Calu3 (cell line): ENCODE measurements at regions of chr3 and their contacts with region 1.

Region 1: DNA sequence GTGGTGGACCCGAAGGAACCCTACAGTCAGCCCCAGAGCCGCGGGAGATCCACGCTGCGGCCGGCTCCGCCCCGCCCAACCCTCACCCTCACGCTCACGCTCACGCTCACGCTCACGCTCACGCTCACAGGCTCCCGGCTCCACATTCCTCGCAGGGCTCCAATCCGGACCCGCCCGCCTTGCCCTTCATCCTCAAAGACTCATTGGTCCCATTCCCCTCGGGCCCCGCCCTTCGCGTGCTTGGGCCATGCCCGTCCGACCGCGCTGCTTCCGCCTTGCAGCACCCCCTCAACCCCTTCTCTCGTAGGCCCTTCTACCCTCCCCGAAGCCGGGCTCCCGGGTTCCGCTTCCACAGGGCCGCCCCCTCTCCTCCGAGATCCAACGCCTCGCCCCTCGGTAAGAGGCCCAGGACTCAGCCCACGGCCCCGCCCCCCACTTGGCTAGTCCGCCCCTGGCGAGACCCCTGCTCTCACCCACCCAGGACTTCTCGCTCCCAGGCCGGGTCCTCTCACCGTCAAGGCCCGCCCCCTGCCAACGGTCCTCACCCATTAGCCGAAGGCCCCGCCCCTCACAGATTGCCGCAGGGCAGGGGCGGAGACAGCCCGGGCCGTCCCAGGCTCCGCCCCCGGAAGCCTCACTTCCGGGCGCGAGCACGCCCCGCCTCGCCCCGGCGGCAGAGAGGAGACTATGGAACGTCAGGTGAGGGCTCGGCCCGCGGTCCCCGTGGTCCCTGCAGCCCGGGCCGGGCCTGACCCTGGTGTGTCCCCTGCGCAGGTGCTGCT is at the start of gene APEH:
- DNase-seq: peak; percentile 99
- H3K4me3 Mint-ChIP-seq: peak within 1 kb of the TSS; percentile 97
- H3K27ac Mint-ChIP-seq: peak within 1 kb of the TSS; percentile 95
- H3K4me1 Mint-ChIP-seq: peaks cover 32% of the 10 kb centered on the region
- H3K27me3 Mint-ChIP-seq: no peaks in the 10 kb centered on the region
- CTCF ChIP-seq: no peak
- total RNA-seq, gene APEH: 187 and 207 TPM in 2 replicates

Region 2: DNA sequence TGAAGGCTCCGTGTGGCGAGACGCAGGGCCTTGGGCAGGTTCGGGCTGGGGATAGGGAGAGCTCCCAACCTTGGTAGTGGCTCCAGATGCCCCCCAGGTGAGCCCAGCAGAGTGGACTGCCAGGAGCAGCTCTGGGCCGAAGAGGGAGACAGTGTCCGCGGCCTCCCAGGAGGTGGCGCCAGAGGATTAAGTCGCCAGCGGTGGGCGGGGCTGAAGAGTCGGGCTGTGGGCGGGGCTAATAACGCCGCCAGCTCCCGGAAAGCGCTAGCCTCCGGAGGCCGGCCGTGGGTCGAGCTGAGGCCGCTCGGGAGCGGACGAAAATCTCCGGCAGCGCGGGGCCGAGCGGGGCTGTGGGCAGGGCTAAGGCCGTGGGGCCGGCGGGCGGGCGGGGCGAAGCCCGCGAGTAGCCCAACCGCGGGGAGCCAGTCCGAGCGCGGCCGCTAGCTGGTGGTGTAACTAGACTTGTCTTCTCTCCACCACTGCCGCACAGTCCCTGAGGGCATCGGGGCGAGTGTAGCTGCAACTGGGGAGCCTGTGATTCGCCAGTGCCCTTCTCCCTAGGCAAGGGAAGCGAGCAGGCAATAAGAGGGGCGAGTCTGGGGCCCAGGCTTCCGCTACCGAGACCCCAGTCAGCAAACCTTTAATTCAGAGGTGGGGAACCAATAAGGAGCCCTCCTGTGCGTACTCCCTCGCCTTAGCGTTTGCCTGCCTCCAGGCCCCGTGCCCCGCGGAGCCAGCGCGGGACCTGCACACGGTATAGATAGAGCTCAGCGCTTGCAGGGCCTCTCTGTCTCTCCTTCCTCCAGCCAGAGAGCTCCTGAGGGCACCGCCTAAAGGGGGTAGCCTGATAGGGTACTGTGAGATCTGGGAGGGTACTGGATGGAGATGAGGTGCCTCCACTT is 134.0 kb before region 1 on chr3:
- CTCF ChIA-PET with region 1: interaction called, 102 read pairs
- intact Hi-C with region 1: loop called (anchors 1 kb)
- DNase-seq: peak; percentile 95
- H3K4me3 Mint-ChIP-seq: peak overlapping the region; percentile 66
- H3K27ac Mint-ChIP-seq: no peak overlapping the region
- H3K4me1 Mint-ChIP-seq: no peaks in the 10 kb centered on the region
- H3K27me3 Mint-ChIP-seq: peaks cover 25% of the 10 kb centered on the region
- CTCF ChIP-seq: peak; percentile 64